ENCODE measurements at regions of chr15 and their contacts with region 1.

Region 1: GRCh38 chr15:40274350-40275274 is 8.3 kb downstream of the ANKRD63 start:
- DNase-seq: peak; percentile 61

Region 2: DNA sequence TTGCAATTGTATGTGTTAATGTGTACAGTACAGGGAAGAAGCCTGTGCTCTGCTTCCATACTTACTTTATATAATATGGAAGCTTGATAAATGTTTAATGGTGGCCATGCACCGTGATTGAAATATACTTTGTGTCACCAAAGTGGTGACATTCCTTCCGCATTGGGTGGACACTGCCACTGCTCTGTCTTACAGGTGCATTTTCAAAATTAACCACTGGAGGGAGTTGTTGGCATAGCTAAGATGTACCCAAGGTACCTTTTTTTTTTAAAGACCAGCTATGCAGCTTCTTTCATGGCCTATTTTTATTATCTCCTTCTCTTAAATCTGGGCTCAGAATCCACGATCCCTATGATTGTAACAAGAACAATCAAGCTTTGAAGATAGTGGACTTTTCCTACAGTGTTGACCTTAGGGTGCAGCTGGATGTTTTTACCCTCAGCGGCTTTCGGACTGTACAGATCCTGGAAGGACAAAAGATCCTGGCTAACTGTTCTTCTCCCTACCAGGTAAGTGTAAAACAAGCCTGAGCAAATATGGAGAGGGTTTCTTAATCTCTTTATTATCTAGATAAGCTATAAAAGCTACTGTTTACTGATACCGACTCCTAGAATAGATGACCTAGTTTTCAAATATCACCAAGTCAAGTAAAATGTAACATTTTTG is 57.3 kb before region 1 on chr15:
- CTCF ChIA-PET with region 1: interaction called, 56 read pairs
- POLR2A ChIA-PET with region 1: no interaction called
- DNase-seq: peak; percentile 58

Region 3: GRCh38 chr15:40263024-40263754 is 11.4 kb before region 1 on chr15:
- CTCF ChIA-PET with region 1: interaction called, 34 read pairs
- POLR2A ChIA-PET with region 1: interaction called, 3 read pairs
- DNase-seq: no peak

Region 4: DNA sequence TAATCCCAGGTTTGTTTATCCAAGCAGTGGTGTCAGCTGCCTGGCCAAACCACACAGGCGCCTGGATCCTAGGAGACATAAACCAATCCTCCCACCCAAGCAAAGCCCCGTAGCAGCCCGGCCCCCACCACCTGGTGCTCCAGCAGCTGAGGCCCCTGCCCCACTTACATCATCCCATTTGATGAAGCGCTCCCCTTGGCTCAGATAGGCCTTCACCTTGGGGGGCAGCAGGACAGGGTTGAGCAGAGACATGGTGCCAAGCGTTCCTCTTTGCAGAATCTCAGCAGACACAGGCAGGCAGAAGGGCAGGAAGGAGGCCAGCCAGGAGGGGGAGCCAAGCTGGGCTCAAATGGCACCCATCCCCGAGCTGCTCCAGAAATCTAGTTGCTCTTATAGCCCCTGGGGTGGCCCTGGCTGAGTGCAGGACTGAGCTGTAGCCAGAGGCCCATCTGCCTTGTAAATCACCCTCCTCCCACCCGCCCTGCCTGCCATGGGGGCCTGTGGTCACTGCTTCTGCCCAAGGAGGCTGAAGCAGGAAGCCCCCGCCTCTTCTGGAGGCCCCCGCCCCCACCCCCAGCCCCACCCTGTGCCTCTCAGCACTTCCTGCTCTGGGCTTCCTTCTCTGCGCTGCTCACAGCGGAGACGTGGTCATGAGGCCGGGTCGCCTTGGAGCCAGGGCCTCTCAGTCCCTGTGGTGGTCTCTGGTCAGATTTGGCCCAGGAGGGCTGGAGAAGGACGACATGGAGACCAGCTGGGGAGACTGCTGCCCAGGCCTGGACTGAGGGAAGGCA is 33.0 kb after region 1 on chr15 and contains the start of gene PLCB2:
- CTCF ChIA-PET with region 1: interaction called, 55 read pairs
- POLR2A ChIA-PET with region 1: interaction called, 3 read pairs
- DNase-seq: no peak

Measured in HEK293T (cell line).